ENCODE measurements at regions of chr6 and their contacts with region 1.

Region 1: DNA sequence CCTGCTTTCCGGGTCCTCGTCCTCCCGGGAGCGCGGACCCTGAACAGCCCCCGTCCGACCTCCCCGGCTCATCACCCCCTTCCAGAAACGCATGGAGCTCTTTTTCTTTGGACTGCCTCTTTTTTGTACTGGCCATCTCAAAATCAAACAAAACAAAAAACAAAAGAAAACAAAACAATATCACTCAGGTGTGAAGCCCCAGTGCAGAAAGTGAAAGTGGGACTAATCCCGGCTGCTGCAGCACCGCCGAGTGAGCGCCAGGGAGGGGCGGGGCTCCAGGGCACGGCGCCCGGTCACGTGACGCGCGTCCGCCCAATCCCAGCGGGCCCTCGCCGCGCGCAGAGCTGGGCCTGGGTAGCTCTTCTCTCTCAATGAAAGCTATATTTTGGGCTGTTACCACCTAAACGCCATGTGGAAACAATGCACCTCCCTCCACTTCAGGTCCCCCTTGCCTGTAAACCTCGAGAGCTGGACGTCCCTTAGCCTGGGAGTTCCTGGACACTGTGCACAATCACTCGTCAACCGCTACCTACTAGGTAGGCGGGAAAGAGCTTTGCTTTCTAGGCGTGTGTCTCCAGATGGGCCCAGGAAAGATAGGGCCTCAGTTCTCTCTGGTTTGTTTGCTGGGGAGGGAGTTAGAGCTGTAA is 93.7 kb upstream of the PRDM1 start:
- DNase-seq: peak; percentile 89 to 91 (median 91)
- H3K4me3 ChIP-seq: peak overlapping the region; percentile 68 to 90
- H3K4me3 Mint-ChIP-seq: peak overlapping the region; percentile 88 to 98 (median 96)
- H3K27ac ChIP-seq: peak overlapping the region; percentile 72
- H3K27ac Mint-ChIP-seq: peak overlapping the region; percentile 87 to 98 (median 96)
- H3K4me1 ChIP-seq: peaks cover 36% of the 10 kb centered on the region
- H3K4me1 Mint-ChIP-seq: peaks cover 26 to 56% (median 30%) of the 10 kb centered on the region in 4 donors
- H3K27me3 ChIP-seq: peaks cover 4% of the 10 kb centered on the region
- H3K27me3 Mint-ChIP-seq: peaks cover 5 to 12% of the 10 kb centered on the region in 2 donors

Region 2: DNA sequence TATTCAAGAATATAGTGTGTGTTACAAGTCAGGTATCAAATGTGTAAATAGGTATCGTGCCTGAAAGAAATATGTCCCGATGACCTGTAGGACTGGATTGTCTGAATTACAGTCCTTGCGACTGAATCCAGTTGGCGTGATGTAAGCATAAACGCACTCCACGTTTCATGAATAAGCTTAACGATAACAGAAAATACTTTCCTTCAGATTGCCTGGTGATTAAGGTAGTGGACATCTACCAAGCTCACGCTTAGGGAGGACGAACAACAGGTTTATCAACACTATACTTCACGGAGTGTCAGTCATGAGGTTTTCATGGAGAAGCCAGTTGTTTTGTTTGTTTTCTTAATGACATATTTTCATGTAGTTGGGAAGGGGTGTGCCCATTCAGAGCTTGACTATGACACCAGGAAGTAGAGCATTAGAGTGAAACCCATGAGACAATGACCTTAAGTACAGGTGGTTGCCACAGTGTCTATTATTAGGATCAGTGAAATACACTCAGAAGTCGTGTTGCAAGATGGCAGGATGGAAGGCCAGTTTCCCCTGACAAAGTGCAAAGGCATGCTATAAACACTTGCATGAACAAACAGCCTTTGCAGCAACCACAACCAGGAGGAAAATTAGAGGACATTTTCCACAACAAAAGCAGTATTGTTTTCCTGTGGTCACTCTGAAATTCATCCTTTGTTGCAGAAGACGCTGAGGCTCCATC is 212.1 kb before region 1 on chr6:
- CTCF ChIA-PET with region 1: no interaction called
- POLR2A ChIA-PET with region 1: interaction called, 11 read pairs
- intact Hi-C with region 1: loop called (anchors 5 kb)
- DNase-seq: no peak
- H3K4me3 ChIP-seq: no peak overlapping the region
- H3K4me3 Mint-ChIP-seq: peak overlapping the region in 1 of 8 donors; percentile 6
- H3K27ac ChIP-seq: no peak overlapping the region
- H3K27ac Mint-ChIP-seq: peak overlapping the region in 2 of 7 donors; percentile 19 to 31
- H3K4me1 ChIP-seq: peaks cover 39% of the 10 kb centered on the region
- H3K4me1 Mint-ChIP-seq: peaks cover 22 to 43% (median 31%) of the 10 kb centered on the region in 4 donors
- H3K27me3 ChIP-seq: no peaks in the 10 kb centered on the region
- H3K27me3 Mint-ChIP-seq: no peaks in the 10 kb centered on the region

Region 3: GRCh38 chr6:105920071-105920470 is 72.4 kb before region 1 on chr6:
- CTCF ChIA-PET with region 1: no interaction called
- POLR2A ChIA-PET with region 1: no interaction called
- intact Hi-C with region 1: no loop called
- DNase-seq: no peak
- H3K4me3 ChIP-seq: no peak overlapping the region
- H3K4me3 Mint-ChIP-seq: no peak overlapping the region
- H3K27ac ChIP-seq: no peak overlapping the region
- H3K27ac Mint-ChIP-seq: no peak overlapping the region
- H3K4me1 ChIP-seq: no peaks in the 10 kb centered on the region
- H3K4me1 Mint-ChIP-seq: no peaks in the 10 kb centered on the region
- H3K27me3 ChIP-seq: no peaks in the 10 kb centered on the region
- H3K27me3 Mint-ChIP-seq: peaks cover 1% of the 10 kb centered on the region in 2 donors

Region 4: DNA sequence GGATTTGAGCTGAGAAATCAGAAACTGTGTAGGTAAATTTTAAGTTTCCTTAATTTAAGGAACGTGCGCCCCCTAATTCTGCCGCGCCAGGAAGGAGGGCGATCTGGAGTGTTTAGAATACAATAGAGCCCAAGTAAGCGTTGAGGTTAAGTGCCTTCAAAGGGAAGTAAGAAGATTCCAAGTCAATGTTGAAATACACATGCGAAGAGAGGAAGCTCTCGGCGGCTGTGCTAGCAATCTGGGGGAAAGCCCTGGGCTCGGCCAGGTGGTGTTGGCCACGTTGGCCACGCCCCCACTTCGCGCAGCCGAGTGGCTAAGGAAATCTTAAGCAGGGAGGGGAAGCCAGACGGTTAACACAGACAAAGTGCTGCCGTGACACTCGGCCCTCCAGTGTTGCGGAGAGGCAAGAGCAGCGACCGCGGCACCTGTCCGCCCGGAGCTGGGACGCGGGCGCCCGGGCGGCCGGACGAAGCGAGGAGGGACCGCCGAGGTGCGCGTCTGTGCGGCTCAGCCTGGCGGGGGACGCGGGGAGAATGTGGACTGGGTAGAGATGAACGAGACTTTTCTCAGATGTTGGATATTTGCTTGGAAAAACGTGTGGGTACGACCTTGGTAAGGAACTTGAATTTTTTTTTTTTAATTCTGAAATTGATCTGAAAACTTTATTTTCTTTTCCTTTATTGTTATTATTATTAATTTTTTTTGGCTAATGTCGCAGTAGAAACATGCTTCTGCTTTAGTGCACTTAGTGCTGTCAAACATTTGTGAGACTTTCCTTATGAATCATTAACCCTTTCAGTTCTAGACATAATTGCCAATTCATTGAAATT is 93.8 kb after region 1 on chr6 and contains the start of gene PRDM1:
- CTCF ChIA-PET with region 1: interaction called, 31 read pairs
- POLR2A ChIA-PET with region 1: interaction called, 49 read pairs
- intact Hi-C with region 1: loop called (anchors 1 kb)
- DNase-seq: peak; percentile 78 to 93 (median 80)
- H3K4me3 ChIP-seq: peak within 1 kb of the TSS; percentile 58 to 61
- H3K4me3 Mint-ChIP-seq: peak within 1 kb of the TSS; percentile 89 to 97 (median 94)
- H3K27ac ChIP-seq: peak within 1 kb of the TSS; percentile 57
- H3K27ac Mint-ChIP-seq: peak within 1 kb of the TSS; percentile 81 to 94 (median 91)
- H3K4me1 ChIP-seq: peaks cover 84% of the 10 kb centered on the region
- H3K4me1 Mint-ChIP-seq: peaks cover 66 to 95% (median 82%) of the 10 kb centered on the region in 4 donors
- H3K27me3 ChIP-seq: no peaks in the 10 kb centered on the region
- H3K27me3 Mint-ChIP-seq: peaks cover 0 to 2% of the 10 kb centered on the region in 2 donors
- total RNA-seq, gene PRDM1: 33.4 to 34.0 TPM

Region 5: DNA sequence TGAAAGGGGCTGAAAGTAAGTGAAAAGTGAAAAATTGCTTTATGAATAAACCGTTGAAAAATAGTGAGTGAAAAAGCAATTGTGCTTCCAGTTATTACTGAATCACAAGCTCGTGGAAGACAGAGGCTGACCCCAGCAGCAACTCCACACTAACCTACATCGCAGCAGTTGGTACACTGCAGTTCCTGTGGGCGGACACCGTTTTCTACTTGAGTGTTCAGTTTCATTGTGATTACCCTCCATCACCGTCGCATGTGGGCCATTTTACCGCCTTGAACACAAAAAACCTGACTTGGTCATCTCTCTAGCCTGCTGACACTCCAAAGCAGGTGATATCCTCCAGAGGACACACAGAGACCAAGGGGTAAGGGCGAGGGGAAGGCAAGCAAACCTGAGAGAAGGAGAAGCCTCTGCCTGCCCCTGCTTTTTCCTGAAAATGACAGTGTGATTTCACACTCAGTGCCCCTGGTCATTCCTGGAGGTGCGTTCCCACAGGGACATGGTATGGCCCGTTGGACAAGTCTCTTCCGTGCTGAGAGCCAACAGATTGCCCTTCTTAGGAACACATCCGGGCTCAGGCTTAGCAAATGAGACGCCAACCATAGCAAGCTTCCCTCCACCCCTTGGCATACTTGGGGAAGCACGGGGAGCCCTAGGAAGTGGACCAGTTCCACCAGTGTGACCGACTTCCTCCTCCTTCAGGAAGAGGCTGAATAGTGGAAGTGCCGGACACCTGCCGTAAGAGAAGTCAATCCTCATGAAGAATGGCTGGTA is 122.2 kb after region 1 on chr6:
- CTCF ChIA-PET with region 1: interaction called, 6 read pairs
- POLR2A ChIA-PET with region 1: interaction called, 25 read pairs
- intact Hi-C with region 1: no loop called
- DNase-seq: peak in 3 of 5 donors; percentile 33 to 64 (median 39)
- H3K4me3 ChIP-seq: peak overlapping the region in 1 of 2 donors; percentile 30
- H3K4me3 Mint-ChIP-seq: peak overlapping the region; percentile 64 to 86 (median 75)
- H3K27ac ChIP-seq: peak overlapping the region; percentile 41
- H3K27ac Mint-ChIP-seq: peak overlapping the region; percentile 54 to 90 (median 85)
- H3K4me1 ChIP-seq: peaks cover 88% of the 10 kb centered on the region
- H3K4me1 Mint-ChIP-seq: peaks cover 65 to 98% (median 81%) of the 10 kb centered on the region in 4 donors
- H3K27me3 ChIP-seq: no peaks in the 10 kb centered on the region
- H3K27me3 Mint-ChIP-seq: peaks cover 0 to 2% of the 10 kb centered on the region in 2 donors

Region 6: DNA sequence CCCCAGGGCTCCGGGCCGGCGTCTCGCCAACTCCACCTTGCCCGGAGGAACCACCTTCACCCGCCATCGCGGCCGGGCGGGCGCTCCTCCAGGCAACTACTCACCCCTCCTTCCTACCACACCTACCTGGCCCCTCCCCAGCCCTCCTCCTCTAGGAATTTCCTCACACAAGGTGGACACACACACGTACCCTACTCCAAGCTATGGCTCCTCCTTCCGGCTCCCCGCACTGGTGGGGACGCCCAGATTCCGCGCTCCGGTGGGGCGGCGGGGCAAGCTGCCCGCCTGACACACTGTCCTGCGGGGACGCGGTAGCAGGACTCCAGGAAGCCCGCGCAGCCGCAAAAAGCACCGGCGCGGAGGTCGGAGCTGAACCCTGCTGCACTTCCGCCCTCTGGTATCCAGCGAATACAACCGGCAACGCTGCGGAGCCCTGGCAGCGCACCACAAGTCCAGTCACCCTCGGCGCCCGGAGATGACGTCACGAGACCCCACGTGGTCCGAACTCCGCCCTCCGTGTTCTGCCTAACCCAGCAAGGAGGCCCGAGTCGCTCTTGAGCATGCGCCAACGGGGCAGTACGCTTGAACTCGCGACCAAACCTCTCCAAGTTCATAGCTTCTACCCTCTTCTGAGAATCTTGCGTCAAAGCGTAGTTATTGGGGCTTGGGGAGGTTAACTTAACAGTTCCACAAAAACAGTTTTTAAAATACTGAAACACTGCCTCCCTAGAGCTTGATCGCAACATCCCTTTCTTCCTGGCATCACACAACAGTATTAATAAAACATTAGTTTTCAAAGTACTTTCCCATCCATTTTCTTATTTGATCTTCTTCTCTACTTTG is 333.1 kb after region 1 on chr6 and contains the start of gene ATG5:
- CTCF ChIA-PET with region 1: interaction called, 3 read pairs
- POLR2A ChIA-PET with region 1: interaction called, 23 read pairs
- intact Hi-C with region 1: loop called (anchors 2 kb)
- DNase-seq: peak; percentile 99 to 100 (median 99)
- H3K4me3 ChIP-seq: peak within 1 kb of the TSS; percentile 87 to 97
- H3K4me3 Mint-ChIP-seq: peak within 1 kb of the TSS; percentile 94 to 100 (median 99)
- H3K27ac ChIP-seq: peak within 1 kb of the TSS; percentile 85
- H3K27ac Mint-ChIP-seq: peak within 1 kb of the TSS; percentile 96 to 99 (median 98)
- H3K4me1 ChIP-seq: peaks cover 33% of the 10 kb centered on the region
- H3K4me1 Mint-ChIP-seq: peaks cover 35 to 48% (median 44%) of the 10 kb centered on the region in 4 donors
- H3K27me3 ChIP-seq: no peaks in the 10 kb centered on the region
- H3K27me3 Mint-ChIP-seq: peaks cover 5 to 7% of the 10 kb centered on the region in 2 donors
- total RNA-seq, gene ATG5: 26.8 to 30.2 TPM